GM12878 (cell line): ENCODE measurements at regions of chr16 and their contacts with region 1.

Region 1: GRCh38 chr16:22098405-22099255 is 6.3 kb downstream of the VWA3A start:
- DNase-seq: peak; percentile 17
- ATAC-seq: peak; percentile 97
- H3K4me3 ChIP-seq: no peak overlapping the region
- H3K27ac ChIP-seq: no peak overlapping the region
- H3K4me1 ChIP-seq: no peaks in the 10 kb centered on the region
- H3K27me3 ChIP-seq: no peaks in the 10 kb centered on the region; a peak in 1 of 4 replicates
- CTCF ChIP-seq: peak; percentile 68 to 75 (median 69)
- EP300 ChIP-seq: no peak
- POLR2A ChIP-seq: no peak
- RAD21 ChIP-seq: peak; percentile 69

Region 2: DNA sequence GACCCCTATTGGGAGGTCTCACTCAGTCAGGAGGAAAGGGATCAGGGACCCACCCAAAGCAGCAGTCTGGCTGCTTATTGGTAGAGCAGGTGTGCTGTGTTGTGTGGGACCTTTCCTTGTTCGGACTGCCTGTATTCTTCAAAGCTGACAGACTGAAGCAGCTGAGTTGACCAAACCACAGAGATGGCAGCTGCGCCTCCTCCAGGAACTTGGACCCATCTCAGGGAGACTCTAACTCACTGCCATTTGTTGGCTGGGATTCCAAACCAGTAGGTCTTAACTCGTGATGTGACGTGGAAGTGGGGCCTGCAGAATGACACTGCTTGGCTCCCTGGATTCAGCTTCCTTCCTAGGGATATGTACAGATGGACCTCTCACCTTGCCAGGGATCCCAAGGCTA is 155.1 kb before region 1 on chr16:
- CTCF ChIA-PET with region 1: no interaction called
- POLR2A ChIA-PET with region 1: no interaction called
- RAD21 ChIA-PET with region 1: no interaction called
- SMC1A ChIA-PET with region 1: no interaction called
- in situ Hi-C with region 1: no loop called
- intact Hi-C with region 1: no loop called
- DNase-seq: no peak
- ATAC-seq: no peak
- H3K4me3 ChIP-seq: no peak overlapping the region
- H3K27ac ChIP-seq: no peak overlapping the region
- H3K4me1 ChIP-seq: peaks cover 2% of the 10 kb centered on the region
- H3K27me3 ChIP-seq: no peaks in the 10 kb centered on the region
- CTCF ChIP-seq: no peak
- EP300 ChIP-seq: no peak
- POLR2A ChIP-seq: no peak
- RAD21 ChIP-seq: no peak

Region 3: DNA sequence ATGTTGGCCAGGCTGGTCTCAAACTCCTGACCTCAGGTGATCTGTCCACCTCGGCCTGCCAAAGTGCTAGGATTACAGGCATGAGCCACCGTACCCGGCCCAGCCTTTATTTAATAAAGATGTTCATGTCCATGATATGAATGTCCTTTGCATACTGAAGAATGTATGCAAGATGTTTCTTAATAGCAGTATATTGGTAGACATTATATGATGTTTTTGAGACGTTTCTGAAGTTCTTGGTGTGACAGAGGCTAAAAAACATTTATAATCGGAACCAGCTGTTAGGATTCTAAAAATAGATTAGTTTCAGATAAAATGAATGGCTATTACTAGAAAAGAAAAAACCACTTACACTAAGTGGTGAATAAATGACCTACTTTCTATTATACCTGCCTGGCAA is 109.5 kb before region 1 on chr16:
- CTCF ChIA-PET with region 1: interaction called, 11 read pairs
- POLR2A ChIA-PET with region 1: no interaction called
- RAD21 ChIA-PET with region 1: interaction called, 8 read pairs
- SMC1A ChIA-PET with region 1: interaction called, 4 read pairs
- in situ Hi-C with region 1: no loop called
- intact Hi-C with region 1: no loop called
- DNase-seq: no peak
- ATAC-seq: no peak
- H3K4me3 ChIP-seq: no peak overlapping the region
- H3K27ac ChIP-seq: no peak overlapping the region
- H3K4me1 ChIP-seq: no peaks in the 10 kb centered on the region
- H3K27me3 ChIP-seq: no peaks in the 10 kb centered on the region
- CTCF ChIP-seq: no peak
- EP300 ChIP-seq: no peak
- POLR2A ChIP-seq: no peak
- RAD21 ChIP-seq: no peak

Region 4: GRCh38 chr16:22007509-22008214 is 91.0 kb before region 1 on chr16 and contains the start of gene MOSMO:
- CTCF ChIA-PET with region 1: interaction called, 33 read pairs
- POLR2A ChIA-PET with region 1: no interaction called
- RAD21 ChIA-PET with region 1: interaction called, 4 read pairs
- SMC1A ChIA-PET with region 1: interaction called, 39 read pairs
- in situ Hi-C with region 1: no loop called
- intact Hi-C with region 1: no loop called
- DNase-seq: no peak
- ATAC-seq: peak; percentile 88
- H3K4me3 ChIP-seq: peak within 1 kb of the TSS; percentile 98
- H3K27ac ChIP-seq: peak within 1 kb of the TSS; percentile 54
- H3K4me1 ChIP-seq: peaks cover 15% of the 10 kb centered on the region
- H3K27me3 ChIP-seq: no peaks in the 10 kb centered on the region
- CTCF ChIP-seq: no peak
- EP300 ChIP-seq: no peak
- POLR2A ChIP-seq: peak; percentile 75
- RAD21 ChIP-seq: no peak
- polyA plus RNA-seq, gene MOSMO: 2.2 to 7.3 TPM

Region 5: GRCh38 chr16:22109258-22109898 is 10.7 kb after region 1 on chr16:
- CTCF ChIA-PET with region 1: interaction called, 16 read pairs
- POLR2A ChIA-PET with region 1: no interaction called
- RAD21 ChIA-PET with region 1: interaction called, 4 read pairs
- SMC1A ChIA-PET with region 1: interaction called, 10 read pairs
- in situ Hi-C with region 1: no loop called
- intact Hi-C with region 1: no loop called
- DNase-seq: no peak
- ATAC-seq: peak; percentile 49
- H3K4me3 ChIP-seq: no peak overlapping the region
- H3K27ac ChIP-seq: no peak overlapping the region
- H3K4me1 ChIP-seq: no peaks in the 10 kb centered on the region
- H3K27me3 ChIP-seq: peaks cover 0 to 8% of the 10 kb centered on the region in 2 experiments; a peak in 1 of 4 replicates
- CTCF ChIP-seq: no peak
- EP300 ChIP-seq: no peak
- POLR2A ChIP-seq: no peak
- RAD21 ChIP-seq: no peak

Region 6: DNA sequence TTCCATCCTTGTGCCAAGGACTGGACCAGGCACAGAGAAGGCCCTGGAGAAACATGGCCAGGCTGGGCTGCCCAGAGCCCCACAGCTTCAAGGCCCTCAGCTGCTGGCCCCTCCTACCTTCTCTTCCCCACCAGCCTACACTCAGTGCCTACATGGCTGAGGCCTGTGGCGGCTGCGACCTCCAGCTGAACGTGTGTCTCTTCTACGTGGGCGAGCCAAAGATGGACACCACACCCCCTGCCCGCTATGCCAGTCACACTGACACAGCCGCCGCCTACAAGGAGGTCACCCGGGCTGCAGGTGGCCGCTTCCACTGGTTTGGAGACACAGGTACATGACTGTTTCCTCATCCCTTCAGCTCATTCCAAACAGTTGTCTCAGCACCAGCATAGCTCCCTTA is 34.1 kb after region 1 on chr16:
- CTCF ChIA-PET with region 1: no interaction called
- POLR2A ChIA-PET with region 1: no interaction called
- RAD21 ChIA-PET with region 1: no interaction called
- SMC1A ChIA-PET with region 1: no interaction called
- in situ Hi-C with region 1: no loop called
- intact Hi-C with region 1: no loop called
- DNase-seq: no peak
- ATAC-seq: no peak
- H3K4me3 ChIP-seq: no peak overlapping the region
- H3K27ac ChIP-seq: no peak overlapping the region
- H3K4me1 ChIP-seq: no peaks in the 10 kb centered on the region
- H3K27me3 ChIP-seq: no peaks in the 10 kb centered on the region
- CTCF ChIP-seq: no peak
- EP300 ChIP-seq: no peak
- POLR2A ChIP-seq: no peak
- RAD21 ChIP-seq: no peak